GM10248 (cell line): ENCODE measurements at regions of chr11 and their contacts with region 1.

Region 1: GRCh38 chr11:7520981-7521487 is 7.2 kb downstream of the PPFIBP2 start:
- DNase-seq: peak; percentile 51
- CTCF ChIP-seq: no peak

Region 2: GRCh38 chr11:7508087-7508486 is 12.9 kb before region 1 on chr11:
- CTCF ChIA-PET with region 1: interaction called, 55 read pairs
- POLR2A ChIA-PET with region 1: interaction called, 3 read pairs
- DNase-seq: no peak
- CTCF ChIP-seq: no peak

Region 3: DNA sequence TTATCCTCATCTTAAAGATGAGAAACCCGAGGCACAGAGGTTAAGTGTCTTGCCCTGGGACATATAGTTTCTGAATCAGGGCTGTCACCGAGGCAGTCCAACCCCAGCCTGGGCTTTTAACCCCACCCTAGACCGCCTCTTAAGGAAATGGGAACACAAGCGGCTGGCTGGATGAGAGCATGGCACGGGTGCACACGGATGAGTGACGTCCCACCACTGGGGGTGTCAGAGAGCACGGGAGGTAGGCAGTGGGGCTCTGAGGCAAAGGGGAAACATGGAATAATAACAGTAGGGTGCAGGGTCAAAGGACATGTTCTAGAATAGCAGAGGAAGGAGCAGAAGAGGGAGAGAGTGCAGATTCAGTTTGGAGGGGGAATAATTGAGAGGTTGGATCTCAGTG is 15.1 kb after region 1 on chr11:
- CTCF ChIA-PET with region 1: interaction called, 28 read pairs
- POLR2A ChIA-PET with region 1: interaction called, 4 read pairs
- DNase-seq: no peak
- CTCF ChIP-seq: no peak

Region 4: DNA sequence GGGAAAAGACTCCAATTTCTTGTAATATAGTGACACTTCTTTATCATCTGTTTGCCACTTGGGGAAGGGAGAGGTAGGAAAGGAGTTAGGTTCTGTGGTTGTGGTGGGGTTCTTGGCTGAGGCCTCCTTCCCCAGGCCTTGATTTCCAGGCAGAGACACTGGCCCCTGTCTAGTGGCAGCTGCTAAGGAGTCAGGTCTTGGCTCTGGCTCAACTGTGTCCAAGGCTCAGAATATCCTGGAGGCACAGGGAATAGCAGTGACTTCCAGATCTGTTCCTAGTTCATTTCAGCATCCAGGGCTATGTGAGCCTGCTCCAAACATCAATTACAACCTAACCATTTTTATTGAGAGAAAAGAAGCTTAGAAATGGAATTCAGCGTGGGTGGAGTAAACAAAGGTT is 22.3 kb after region 1 on chr11:
- CTCF ChIA-PET with region 1: interaction called, 36 read pairs
- POLR2A ChIA-PET with region 1: no interaction called
- DNase-seq: no peak
- CTCF ChIP-seq: no peak